ENCODE measurements at regions of chr14 and their contacts with region 1.

Region 1: DNA sequence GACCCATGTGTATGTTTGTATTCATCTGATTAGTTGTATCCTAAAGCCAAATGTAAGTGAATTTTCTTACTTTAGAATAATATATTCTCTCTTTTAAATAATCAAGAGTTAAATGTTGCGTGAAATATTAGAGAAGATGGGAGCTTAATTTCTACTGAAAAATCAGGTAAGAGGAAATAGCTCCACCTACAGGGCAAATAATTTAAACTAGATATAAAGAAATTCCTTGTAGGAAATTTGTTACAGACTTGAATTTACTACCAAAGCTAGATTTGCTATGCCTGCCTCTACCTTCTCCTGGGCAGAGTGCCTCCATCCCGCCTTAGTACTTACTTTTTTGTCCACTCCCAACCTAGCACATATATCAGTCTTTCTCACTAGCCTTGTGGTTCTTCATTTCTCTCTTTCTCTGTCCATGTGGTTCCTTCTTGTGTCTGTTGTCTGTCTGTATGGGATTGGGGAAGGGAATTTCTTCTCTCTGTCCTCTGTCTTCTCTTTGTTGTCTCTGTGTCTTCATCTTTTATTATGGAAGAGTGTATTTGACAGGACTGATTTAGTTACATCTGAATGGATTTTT is 44.7 kb downstream of the PALS1 start:
- DNase-seq: no peak
- ATAC-seq: peak in 1 of 4 donors; percentile 58
- H3K4me3 ChIP-seq: no peak overlapping the region
- H3K27ac ChIP-seq: no peak overlapping the region
- H3K4me1 ChIP-seq: peaks cover 8% of the 10 kb centered on the region
- H3K27me3 ChIP-seq: no peaks in the 10 kb centered on the region
- CTCF ChIP-seq: peak; percentile 76

Region 2: GRCh38 chr14:67166450-67166853 is 119.5 kb before region 1 on chr14:
- intact Hi-C with region 1: loop called (anchors 2 to 5 kb)
- DNase-seq: no peak
- ATAC-seq: peak in 1 of 4 donors; percentile 74
- H3K4me3 ChIP-seq: no peak overlapping the region
- H3K27ac ChIP-seq: no peak overlapping the region
- H3K4me1 ChIP-seq: no peaks in the 10 kb centered on the region
- H3K27me3 ChIP-seq: no peaks in the 10 kb centered on the region
- CTCF ChIP-seq: peak; percentile 78

Region 3: DNA sequence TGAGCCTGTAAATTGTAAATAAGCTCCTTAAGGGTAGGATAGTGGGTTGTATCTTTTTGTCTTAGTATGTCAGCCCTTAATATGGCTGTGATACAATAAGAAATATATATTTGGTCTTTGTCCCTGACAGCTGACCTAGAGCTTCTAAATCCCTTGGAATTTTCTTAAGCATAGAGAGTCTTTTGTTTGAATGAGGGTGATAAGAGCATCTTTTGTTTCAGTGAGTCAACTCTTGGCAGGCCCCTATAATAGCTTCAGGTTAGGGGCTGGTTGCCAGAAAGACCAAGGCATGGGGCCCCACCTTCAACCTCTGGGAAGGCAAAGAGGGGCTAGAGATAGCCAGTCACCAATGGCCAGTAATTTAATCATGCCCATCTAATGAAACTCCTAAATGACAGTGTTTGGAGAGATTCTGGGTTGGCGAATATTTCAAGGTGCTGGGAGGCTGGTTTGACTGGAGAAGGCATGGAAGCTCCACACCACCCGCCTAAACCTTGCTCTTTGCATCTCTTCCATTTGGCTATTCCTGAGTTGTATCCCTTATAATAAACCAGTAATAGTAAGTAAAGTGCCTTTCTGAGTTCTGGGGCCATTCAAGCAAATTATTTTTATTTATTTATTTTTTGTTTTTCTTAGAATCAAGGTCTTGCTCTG is 34.3 kb before region 1 on chr14:
- intact Hi-C with region 1: no loop called
- DNase-seq: no peak
- ATAC-seq: no peak
- H3K4me3 ChIP-seq: no peak overlapping the region
- H3K27ac ChIP-seq: no peak overlapping the region
- H3K4me1 ChIP-seq: peaks cover 15% of the 10 kb centered on the region
- H3K27me3 ChIP-seq: no peaks in the 10 kb centered on the region
- CTCF ChIP-seq: no peak

Measured in psoas muscle (tissue), 8 donors.